Activated B cell treated with CpG ODN at 0.5 μM for 24 hours (primary cell): ENCODE measurements at regions of chr14 and their contacts with region 1.

Region 1: DNA sequence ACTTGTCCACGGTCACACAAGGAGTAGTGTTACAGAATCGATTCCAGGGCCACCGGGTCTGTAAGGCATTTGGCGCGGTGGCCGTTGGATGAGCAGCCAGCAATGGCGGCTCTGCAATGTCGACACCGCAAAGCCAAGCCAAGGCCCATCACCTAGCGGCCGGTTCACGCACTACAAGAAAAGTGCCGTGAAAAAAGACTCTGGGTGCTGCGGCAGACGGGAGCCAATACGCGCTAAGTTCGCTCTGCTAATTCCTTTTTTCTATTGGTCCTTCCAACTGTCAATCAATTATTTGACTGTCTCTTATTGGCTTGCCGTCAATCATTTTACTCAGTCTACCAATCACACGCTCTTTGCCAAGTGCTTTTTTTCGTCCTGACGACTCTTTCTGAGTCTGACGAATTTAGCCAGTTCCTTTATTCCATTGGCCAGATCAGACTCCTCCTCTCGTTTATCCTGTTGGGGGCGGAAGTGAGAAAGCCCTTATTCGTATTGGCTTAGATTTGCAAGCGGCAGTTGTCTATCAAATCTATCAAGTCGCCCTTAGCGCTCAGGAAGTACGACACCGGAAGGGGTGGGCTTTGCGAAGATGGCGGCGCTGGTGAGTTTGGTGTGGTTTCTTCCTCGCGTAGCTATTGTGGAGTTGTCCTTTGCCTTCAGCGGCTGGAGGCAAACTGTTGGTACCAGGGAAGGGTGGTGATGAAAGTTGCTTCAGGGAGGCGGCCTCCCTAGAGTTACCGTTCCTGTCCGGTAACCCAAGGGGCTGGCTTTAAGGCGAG is at the start of gene NGDN:
- DNase-seq: peak; percentile 80
- ATAC-seq: peak; percentile 90
- H3K4me3 Mint-ChIP-seq: no peak within 1 kb of the TSS
- H3K27ac Mint-ChIP-seq: no peak within 1 kb of the TSS
- H3K4me1 Mint-ChIP-seq: peaks cover 11% of the 10 kb centered on the region
- H3K27me3 Mint-ChIP-seq: no peaks in the 10 kb centered on the region
- CTCF ChIP-seq: no peak
- total RNA-seq, gene NGDN: 60.5 and 67.4 TPM in 2 replicates

Region 2: GRCh38 chr14:23286020-23286905 is 183.1 kb before region 1 on chr14 and contains the start of gene HOMEZ:
- CTCF ChIA-PET with region 1: no interaction called
- POLR2A ChIA-PET with region 1: no interaction called
- intact Hi-C with region 1: loop called (anchors 1 kb)
- DNase-seq: peak; percentile 97
- ATAC-seq: peak; percentile 97
- H3K4me3 Mint-ChIP-seq: peak within 1 kb of the TSS; percentile 96
- H3K27ac Mint-ChIP-seq: peak within 1 kb of the TSS; percentile 90
- H3K4me1 Mint-ChIP-seq: peaks cover 18% of the 10 kb centered on the region
- H3K27me3 Mint-ChIP-seq: no peaks in the 10 kb centered on the region
- CTCF ChIP-seq: no peak
- total RNA-seq, gene HOMEZ: 10.8 and 11.5 TPM in 2 replicates

Region 3: GRCh38 chr14:23327947-23328744 is 141.2 kb before region 1 on chr14:
- CTCF ChIA-PET with region 1: no interaction called
- POLR2A ChIA-PET with region 1: no interaction called
- intact Hi-C with region 1: loop called (anchors 2 kb)
- DNase-seq: no peak
- ATAC-seq: peak; percentile 73
- H3K4me3 Mint-ChIP-seq: no peak overlapping the region
- H3K27ac Mint-ChIP-seq: no peak overlapping the region
- H3K4me1 Mint-ChIP-seq: peaks cover 3% of the 10 kb centered on the region
- H3K27me3 Mint-ChIP-seq: no peaks in the 10 kb centered on the region
- CTCF ChIP-seq: peak; percentile 42

Region 4: GRCh38 chr14:24442273-24443052 is 973.1 kb after region 1 on chr14 and contains the start of gene SDR39U1:
- CTCF ChIA-PET with region 1: no interaction called
- POLR2A ChIA-PET with region 1: interaction called, 6 read pairs
- intact Hi-C with region 1: loop called (anchors 2 kb)
- DNase-seq: peak; percentile 81
- ATAC-seq: peak; percentile 89
- H3K4me3 Mint-ChIP-seq: peak within 1 kb of the TSS; percentile 98
- H3K27ac Mint-ChIP-seq: peak within 1 kb of the TSS; percentile 98
- H3K4me1 Mint-ChIP-seq: peaks cover 48% of the 10 kb centered on the region
- H3K27me3 Mint-ChIP-seq: no peaks in the 10 kb centered on the region
- CTCF ChIP-seq: no peak
- total RNA-seq, gene SDR39U1: 70.6 and 80.0 TPM in 2 replicates